ENCODE measurements at regions of chr11 and their contacts with region 1.

Region 1: DNA sequence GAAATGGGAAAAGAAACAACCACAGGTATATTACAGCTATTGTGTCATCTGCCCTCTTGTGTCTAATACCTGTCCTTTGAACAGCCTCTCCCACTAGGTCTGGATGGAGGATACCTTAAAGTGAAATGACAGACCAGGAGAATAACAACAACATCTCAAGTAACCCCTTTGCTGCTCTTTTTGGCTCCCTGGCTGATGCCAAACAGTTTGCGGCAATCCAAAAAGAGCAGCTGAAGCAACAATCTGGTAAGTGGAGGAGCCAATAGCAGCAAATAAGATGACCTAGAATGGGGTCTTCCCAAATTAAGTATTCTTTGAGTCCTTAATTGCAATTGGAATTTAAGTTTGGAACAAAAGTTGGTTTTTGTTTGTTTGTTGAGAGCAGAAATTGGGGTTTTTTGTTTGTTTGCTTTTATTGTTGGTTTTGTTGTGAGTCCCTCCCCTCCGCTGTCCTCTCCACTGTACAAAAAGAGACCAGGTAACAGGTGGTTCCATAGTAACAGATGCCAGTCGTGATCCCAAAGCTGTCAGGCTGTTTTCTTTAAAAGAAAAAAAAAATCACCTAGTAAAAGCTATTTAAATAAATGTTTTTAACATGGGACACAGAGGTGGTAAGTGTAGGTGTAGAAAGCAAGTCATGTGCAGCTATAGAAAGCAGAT is 5.7 kb downstream of the UBE4A start:
- DNase-seq: no peak
- H3K4me3 ChIP-seq: no peak overlapping the region
- H3K27ac ChIP-seq: no peak overlapping the region
- H3K4me1 ChIP-seq: peaks cover 8% of the 10 kb centered on the region
- H3K27me3 ChIP-seq: no peaks in the 10 kb centered on the region
- CTCF ChIP-seq: no peak

Region 2: GRCh38 chr11:118314988-118315411 is 50.1 kb before region 1 on chr11:
- CTCF ChIA-PET with region 1: no interaction called
- dilution Hi-C with region 1: loop called (anchors 5 kb)
- in situ Hi-C with region 1: no loop called
- intact Hi-C with region 1: no loop called
- DNase-seq: no peak
- H3K4me3 ChIP-seq: no peak overlapping the region
- H3K27ac ChIP-seq: no peak overlapping the region
- H3K4me1 ChIP-seq: peaks cover 14% of the 10 kb centered on the region
- H3K27me3 ChIP-seq: no peaks in the 10 kb centered on the region
- CTCF ChIP-seq: no peak

Region 3: GRCh38 chr11:118497831-118498230 is 132.7 kb after region 1 on chr11:
- CTCF ChIA-PET with region 1: no interaction called
- dilution Hi-C with region 1: no loop called
- in situ Hi-C with region 1: no loop called
- intact Hi-C with region 1: no loop called
- DNase-seq: no peak
- H3K4me3 ChIP-seq: no peak overlapping the region
- H3K27ac ChIP-seq: no peak overlapping the region
- H3K4me1 ChIP-seq: no peaks in the 10 kb centered on the region
- H3K27me3 ChIP-seq: no peaks in the 10 kb centered on the region
- CTCF ChIP-seq: no peak

Measured in mammary epithelial cell (primary cell).